IMR-90 (cell line): ENCODE measurements at regions of chr15 and their contacts with region 1.

Region 1: GRCh38 chr15:56749982-56750381 is 16.7 kb upstream of the ZNF280D start:
- DNase-seq: peak; percentile 43
- ATAC-seq: peak; percentile 56
- H3K4me3 ChIP-seq: no peak overlapping the region
- H3K27ac ChIP-seq: no peak overlapping the region
- H3K4me1 ChIP-seq: peaks cover under 1% of the 10 kb centered on the region
- H3K27me3 ChIP-seq: no peaks in the 10 kb centered on the region
- CTCF ChIP-seq: no peak
- POLR2A ChIP-seq: no peak
- RAD21 ChIP-seq: no peak

Region 2: GRCh38 chr15:55576943-55577342 is 1173.0 kb before region 1 on chr15:
- CTCF ChIA-PET with region 1: interaction called, 10 read pairs
- POLR2A ChIA-PET with region 1: no interaction called
- dilution Hi-C with region 1: no loop called
- in situ Hi-C with region 1: no loop called
- intact Hi-C with region 1: no loop called
- DNase-seq: no peak
- ATAC-seq: no peak
- H3K4me3 ChIP-seq: no peak overlapping the region
- H3K27ac ChIP-seq: no peak overlapping the region
- H3K4me1 ChIP-seq: no peaks in the 10 kb centered on the region
- H3K27me3 ChIP-seq: no peaks in the 10 kb centered on the region
- CTCF ChIP-seq: no peak
- POLR2A ChIP-seq: no peak
- RAD21 ChIP-seq: no peak